GM12878 (cell line): ENCODE measurements at regions of chr2 and their contacts with region 1.

Region 1: DNA sequence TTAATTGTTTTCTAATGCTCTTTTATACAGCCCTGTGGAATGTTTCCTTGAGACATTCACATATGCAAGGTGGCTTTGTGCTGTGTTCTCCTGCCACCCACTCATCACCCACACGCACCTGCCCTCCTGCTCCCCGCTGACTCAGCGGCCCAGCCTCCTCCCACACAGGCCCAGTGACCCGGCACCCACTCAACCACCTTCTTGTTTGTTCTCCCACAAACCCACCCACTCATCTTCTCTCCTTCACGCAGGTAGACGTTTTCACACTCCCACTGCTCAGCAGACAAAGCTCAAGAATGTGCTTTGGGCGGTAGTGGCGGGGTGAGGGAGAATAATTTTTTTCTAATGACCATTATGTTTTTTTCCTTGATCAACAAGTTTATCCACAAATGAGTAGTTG is 28.6 kb upstream of the NEMP2 start:
- DNase-seq: no peak
- ATAC-seq: peak; percentile 71
- H3K4me3 ChIP-seq: no peak overlapping the region
- H3K27ac ChIP-seq: no peak overlapping the region
- H3K4me1 ChIP-seq: peaks cover 2% of the 10 kb centered on the region; the same call in 1 of the 2 replicates
- H3K27me3 ChIP-seq: no peaks in the 10 kb centered on the region
- CTCF ChIP-seq: no peak
- EP300 ChIP-seq: peak; percentile 41 to 58; a peak in 2 of 4 replicates
- POLR2A ChIP-seq: no peak
- RAD21 ChIP-seq: no peak

Region 2: DNA sequence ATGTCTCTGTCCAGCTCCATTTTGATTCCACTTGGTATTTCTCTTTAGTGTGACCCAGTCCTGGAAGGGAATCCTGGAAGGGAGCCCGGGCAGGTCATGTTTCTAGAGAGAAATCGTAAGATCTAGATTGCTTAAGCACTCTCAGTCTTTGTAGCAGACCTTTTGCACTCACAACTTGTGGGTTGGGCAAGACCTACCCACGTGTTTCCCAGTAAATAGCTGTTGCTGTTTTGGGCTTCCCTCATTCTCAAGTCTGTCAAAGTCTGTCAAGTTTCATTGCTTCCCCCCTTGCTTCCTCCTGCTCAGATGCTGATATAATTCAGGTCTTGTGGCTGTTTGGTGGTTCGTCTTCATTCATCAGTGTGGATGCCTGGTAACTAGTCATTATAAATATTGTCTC is 11.2 kb before region 1 on chr2:
- CTCF ChIA-PET with region 1: interaction called, 15 read pairs
- POLR2A ChIA-PET with region 1: interaction called, 4 read pairs
- RAD21 ChIA-PET with region 1: interaction called, 14 read pairs
- SMC1A ChIA-PET with region 1: interaction called, 38 read pairs
- in situ Hi-C with region 1: no loop called
- intact Hi-C with region 1: no loop called
- DNase-seq: no peak
- ATAC-seq: peak; percentile 64
- H3K4me3 ChIP-seq: no peak overlapping the region
- H3K27ac ChIP-seq: no peak overlapping the region
- H3K4me1 ChIP-seq: no peaks in the 10 kb centered on the region
- H3K27me3 ChIP-seq: no peaks in the 10 kb centered on the region
- CTCF ChIP-seq: no peak
- EP300 ChIP-seq: no peak
- POLR2A ChIP-seq: no peak
- RAD21 ChIP-seq: no peak